ENCODE measurements at regions of chr14 and their contacts with region 1.

Region 1: DNA sequence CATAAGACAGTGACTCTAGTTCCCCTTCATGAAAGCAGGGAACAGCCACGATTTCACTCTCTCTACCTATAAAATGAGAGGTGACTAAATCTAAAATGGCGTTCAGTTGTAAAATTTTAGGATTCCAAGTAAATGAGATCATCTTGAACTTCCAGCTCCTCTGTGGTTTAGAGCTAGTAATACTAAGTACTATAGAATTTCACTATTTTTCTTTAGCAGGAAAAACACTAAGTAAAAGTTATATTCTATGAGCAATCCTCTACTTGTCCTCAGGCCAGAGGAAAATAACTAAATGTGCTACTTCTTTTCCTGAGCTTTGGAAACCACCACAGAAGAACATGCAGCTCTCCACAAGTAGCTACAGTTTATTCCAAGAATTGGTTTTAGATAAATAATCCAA is 55.6 kb downstream of the NIN start:
- DNase-seq: no peak
- H3K4me3 ChIP-seq: no peak overlapping the region
- H3K27ac ChIP-seq: peak overlapping the region in 1 of 4 donors; percentile 52
- H3K4me1 ChIP-seq: peaks cover 8 to 31% (median 12%) of the 10 kb centered on the region in 4 donors
- H3K27me3 ChIP-seq: no peaks in the 10 kb centered on the region
- CTCF ChIP-seq: no peak
- EP300 ChIP-seq: no peak
- POLR2A ChIP-seq: no peak

Region 2: DNA sequence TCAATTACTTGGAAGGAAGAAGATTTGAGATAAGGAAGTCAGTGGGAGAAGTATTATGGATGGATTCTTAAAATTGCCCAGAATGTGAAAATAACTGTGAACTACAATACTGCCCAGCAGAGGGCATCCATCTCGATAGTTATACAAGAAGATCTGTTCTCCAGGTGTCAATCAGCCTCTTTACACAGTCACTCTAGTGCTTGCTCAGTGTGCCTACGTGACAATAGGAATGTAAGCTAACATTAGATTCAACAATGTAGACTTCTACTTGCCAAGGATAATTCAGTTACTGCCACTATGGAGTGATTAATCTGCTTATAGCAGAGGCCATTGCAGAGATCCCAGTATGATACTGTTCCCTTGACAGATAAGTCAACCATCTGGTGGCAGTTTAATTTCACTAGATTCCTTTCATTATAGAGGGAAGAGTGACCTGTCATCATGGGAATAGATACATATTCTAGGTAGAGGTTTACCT is 232.4 kb before region 1 on chr14:
- intact Hi-C with region 1: loop called (anchors 5 kb)
- DNase-seq: no peak
- H3K4me3 ChIP-seq: no peak overlapping the region
- H3K27ac ChIP-seq: no peak overlapping the region
- H3K4me1 ChIP-seq: peaks cover 0 to 22% (median 18%) of the 10 kb centered on the region in 4 donors
- H3K27me3 ChIP-seq: no peaks in the 10 kb centered on the region
- CTCF ChIP-seq: peak; percentile 44 to 65 (median 46)
- EP300 ChIP-seq: no peak
- POLR2A ChIP-seq: no peak

Region 3: GRCh38 chr14:50599700-50600444 is 175.5 kb before region 1 on chr14:
- intact Hi-C with region 1: loop called (anchors 5 kb)
- DNase-seq: no peak
- H3K4me3 ChIP-seq: no peak overlapping the region
- H3K27ac ChIP-seq: no peak overlapping the region
- H3K4me1 ChIP-seq: no peaks in the 10 kb centered on the region
- H3K27me3 ChIP-seq: no peaks in the 10 kb centered on the region
- CTCF ChIP-seq: peak; percentile 47 to 57 (median 48)
- EP300 ChIP-seq: no peak
- POLR2A ChIP-seq: no peak